ENCODE measurements at regions of chr7 and their contacts with region 1.

Region 1: GRCh38 chr7:21507626-21508343 is 35.1 kb upstream of the DNAH11 start:
- DNase-seq: peak in 4 of 9 experiments; percentile 17 to 54 (median 32)
- ATAC-seq: no peak
- H3K4me3 ChIP-seq: no peak overlapping the region
- H3K4me3 Mint-ChIP-seq: no peak overlapping the region
- H3K27ac ChIP-seq: no peak overlapping the region
- H3K27ac Mint-ChIP-seq: no peak overlapping the region
- H3K4me1 ChIP-seq: no peaks in the 10 kb centered on the region
- H3K4me1 Mint-ChIP-seq: no peaks in the 10 kb centered on the region
- H3K27me3 ChIP-seq: no peaks in the 10 kb centered on the region
- H3K27me3 Mint-ChIP-seq: no peaks in the 10 kb centered on the region
- CTCF ChIP-seq: peak; percentile 58

Region 2: DNA sequence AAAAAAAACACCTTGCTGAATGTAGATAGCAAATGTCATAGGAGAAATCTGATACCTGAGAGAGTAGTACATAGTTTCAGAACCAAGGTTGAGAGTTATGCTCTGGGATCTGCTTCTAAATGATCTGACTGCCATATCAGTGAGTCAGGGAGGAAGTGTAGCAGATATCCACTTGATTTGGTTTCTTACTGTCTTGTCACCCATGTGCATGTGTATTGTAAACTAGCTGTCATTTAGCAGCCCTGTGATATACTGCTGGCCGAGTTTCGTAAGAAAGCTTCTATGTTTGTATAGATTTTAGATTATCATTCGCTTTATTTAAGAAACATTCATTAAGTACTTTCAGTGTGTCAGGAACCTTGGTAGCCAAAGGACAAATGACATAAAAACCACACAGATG is 37.9 kb before region 1 on chr7:
- CTCF ChIA-PET with region 1: no interaction called
- POLR2A ChIA-PET with region 1: no interaction called
- intact Hi-C with region 1: loop called in 1 of 2 experiments (anchors 1 kb)
- DNase-seq: no peak
- ATAC-seq: no peak
- H3K4me3 ChIP-seq: no peak overlapping the region
- H3K4me3 Mint-ChIP-seq: no peak overlapping the region
- H3K27ac ChIP-seq: no peak overlapping the region
- H3K27ac Mint-ChIP-seq: no peak overlapping the region
- H3K4me1 ChIP-seq: no peaks in the 10 kb centered on the region
- H3K4me1 Mint-ChIP-seq: peaks cover 59% of the 10 kb centered on the region
- H3K27me3 ChIP-seq: no peaks in the 10 kb centered on the region
- H3K27me3 Mint-ChIP-seq: no peaks in the 10 kb centered on the region
- CTCF ChIP-seq: no peak

Region 3: GRCh38 chr7:21497072-21497471 is 10.7 kb before region 1 on chr7:
- CTCF ChIA-PET with region 1: no interaction called
- POLR2A ChIA-PET with region 1: no interaction called
- intact Hi-C with region 1: no loop called
- DNase-seq: no peak
- ATAC-seq: no peak
- H3K4me3 ChIP-seq: no peak overlapping the region
- H3K4me3 Mint-ChIP-seq: no peak overlapping the region
- H3K27ac ChIP-seq: no peak overlapping the region
- H3K27ac Mint-ChIP-seq: no peak overlapping the region
- H3K4me1 ChIP-seq: no peaks in the 10 kb centered on the region
- H3K4me1 Mint-ChIP-seq: peaks cover 2% of the 10 kb centered on the region
- H3K27me3 ChIP-seq: no peaks in the 10 kb centered on the region
- H3K27me3 Mint-ChIP-seq: no peaks in the 10 kb centered on the region
- CTCF ChIP-seq: no peak

Region 4: GRCh38 chr7:21704359-21704758 is 196.6 kb after region 1 on chr7:
- CTCF ChIA-PET with region 1: no interaction called
- POLR2A ChIA-PET with region 1: no interaction called
- intact Hi-C with region 1: no loop called
- DNase-seq: no peak
- ATAC-seq: no peak
- H3K4me3 ChIP-seq: no peak overlapping the region
- H3K4me3 Mint-ChIP-seq: no peak overlapping the region
- H3K27ac ChIP-seq: no peak overlapping the region
- H3K27ac Mint-ChIP-seq: no peak overlapping the region
- H3K4me1 ChIP-seq: no peaks in the 10 kb centered on the region
- H3K4me1 Mint-ChIP-seq: no peaks in the 10 kb centered on the region
- H3K27me3 ChIP-seq: no peaks in the 10 kb centered on the region
- H3K27me3 Mint-ChIP-seq: peaks cover 2% of the 10 kb centered on the region
- CTCF ChIP-seq: no peak